ENCODE measurements at regions of chr4 and their contacts with region 1.

Region 1: GRCh38 chr4:164731827-164732474 is 22.0 kb upstream of the SMIM31 start:
- DNase-seq: peak; percentile 71
- H3K4me3 Mint-ChIP-seq: no peak overlapping the region
- H3K27ac Mint-ChIP-seq: no peak overlapping the region
- H3K4me1 Mint-ChIP-seq: no peaks in the 10 kb centered on the region
- H3K27me3 Mint-ChIP-seq: no peaks in the 10 kb centered on the region
- CTCF ChIP-seq: peak; percentile 88

Region 2: DNA sequence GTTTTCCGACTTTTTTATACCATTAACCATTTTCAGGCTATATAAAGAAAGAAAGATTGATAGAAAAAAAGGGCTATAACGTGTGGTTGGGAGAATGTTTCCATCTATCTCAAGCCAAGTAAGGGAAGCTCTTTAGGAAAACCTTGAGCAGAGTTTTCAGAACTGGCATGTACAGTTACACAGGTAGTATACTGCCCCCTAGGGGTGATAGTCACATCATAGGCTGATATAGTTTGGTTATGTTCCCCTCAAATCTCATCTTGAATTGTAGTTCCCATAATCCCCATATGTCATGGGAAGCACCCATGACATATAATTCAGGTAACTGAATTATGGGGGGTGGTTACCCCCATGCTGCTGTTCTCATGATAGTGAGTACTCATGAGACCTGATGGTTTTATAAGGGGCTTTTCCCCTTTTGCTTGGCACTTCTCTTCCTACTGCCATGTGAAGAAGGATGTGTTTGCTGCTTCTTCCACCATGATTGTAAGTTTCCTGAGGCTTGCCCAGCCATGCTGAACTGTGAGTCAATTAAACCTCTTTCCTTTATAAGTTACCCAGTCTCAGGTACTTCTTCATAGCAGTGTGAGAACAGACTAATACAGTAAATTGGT is 1050.6 kb before region 1 on chr4:
- CTCF ChIA-PET with region 1: interaction called, 44 read pairs
- POLR2A ChIA-PET with region 1: no interaction called
- intact Hi-C with region 1: loop called (anchors 1 kb)
- DNase-seq: peak; percentile 55
- H3K4me3 Mint-ChIP-seq: no peak overlapping the region
- H3K27ac Mint-ChIP-seq: no peak overlapping the region
- H3K4me1 Mint-ChIP-seq: no peaks in the 10 kb centered on the region
- H3K27me3 Mint-ChIP-seq: no peaks in the 10 kb centered on the region
- CTCF ChIP-seq: peak; percentile 57

Region 3: DNA sequence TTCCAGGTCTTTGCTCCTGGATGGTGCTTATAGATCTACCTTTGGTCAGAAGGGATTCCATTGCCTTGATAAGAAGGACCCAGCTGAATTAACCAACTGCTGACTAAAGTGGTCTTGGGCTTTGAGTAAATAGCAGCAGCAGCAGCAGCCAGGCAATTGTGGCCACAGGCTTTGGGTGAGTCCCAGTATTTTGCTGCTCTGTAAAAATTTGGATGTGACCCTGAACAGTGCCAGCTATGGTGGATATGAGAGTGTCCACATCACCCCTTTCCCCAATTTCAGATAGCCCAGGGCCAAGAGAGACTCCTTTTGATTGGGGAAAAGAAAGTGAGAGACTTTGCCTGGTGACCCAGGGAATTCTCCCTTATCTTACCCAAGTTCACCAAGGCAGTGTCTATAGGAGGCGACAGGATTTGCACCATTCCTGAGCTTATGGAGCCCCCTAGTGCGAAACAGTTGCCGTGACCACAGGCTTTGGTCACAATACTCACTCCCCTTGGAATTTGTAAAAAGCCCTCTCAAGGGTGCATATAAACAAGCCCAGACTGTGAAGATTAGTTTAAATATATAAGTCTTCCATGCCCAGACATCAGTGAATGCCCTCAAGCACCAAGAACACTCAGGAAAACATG is 719.4 kb before region 1 on chr4:
- CTCF ChIA-PET with region 1: interaction called, 6 read pairs
- POLR2A ChIA-PET with region 1: no interaction called
- intact Hi-C with region 1: loop called (anchors 5 kb)
- DNase-seq: peak; percentile 66
- H3K4me3 Mint-ChIP-seq: no peak overlapping the region
- H3K27ac Mint-ChIP-seq: no peak overlapping the region
- H3K4me1 Mint-ChIP-seq: no peaks in the 10 kb centered on the region
- H3K27me3 Mint-ChIP-seq: no peaks in the 10 kb centered on the region
- CTCF ChIP-seq: peak; percentile 55

Region 4: DNA sequence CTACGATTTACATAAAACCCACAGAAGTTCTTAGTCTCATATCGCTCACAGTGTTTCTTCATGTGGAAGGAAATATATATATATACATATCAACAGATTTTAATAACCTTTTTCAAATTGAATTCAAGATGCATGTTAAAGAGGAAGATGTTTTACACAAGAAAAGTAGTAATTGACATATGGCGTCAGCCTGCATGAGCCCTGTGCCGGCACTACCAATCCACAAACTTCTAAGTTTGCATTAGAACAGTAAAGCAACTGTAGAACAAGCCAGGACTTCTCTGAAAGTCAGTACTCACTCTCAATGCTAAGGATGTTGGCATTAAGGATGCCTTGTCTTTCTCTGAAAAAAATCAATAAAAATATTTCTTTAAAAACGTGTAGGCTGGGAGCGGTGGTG is 419.3 kb before region 1 on chr4:
- CTCF ChIA-PET with region 1: interaction called, 7 read pairs
- POLR2A ChIA-PET with region 1: interaction called, 3 read pairs
- intact Hi-C with region 1: loop called (anchors 1 kb)
- DNase-seq: no peak
- H3K4me3 Mint-ChIP-seq: no peak overlapping the region
- H3K27ac Mint-ChIP-seq: no peak overlapping the region
- H3K4me1 Mint-ChIP-seq: no peaks in the 10 kb centered on the region
- H3K27me3 Mint-ChIP-seq: no peaks in the 10 kb centered on the region
- CTCF ChIP-seq: no peak

Region 5: GRCh38 chr4:164383358-164384220 is 348.4 kb before region 1 on chr4:
- CTCF ChIA-PET with region 1: no interaction called
- POLR2A ChIA-PET with region 1: interaction called, 3 read pairs
- intact Hi-C with region 1: loop called (anchors 2 kb)
- DNase-seq: peak; percentile 40
- H3K4me3 Mint-ChIP-seq: peak overlapping the region; percentile 85
- H3K27ac Mint-ChIP-seq: peak overlapping the region; percentile 39
- H3K4me1 Mint-ChIP-seq: no peaks in the 10 kb centered on the region
- H3K27me3 Mint-ChIP-seq: no peaks in the 10 kb centered on the region
- CTCF ChIP-seq: peak; percentile 15

Region 6: DNA sequence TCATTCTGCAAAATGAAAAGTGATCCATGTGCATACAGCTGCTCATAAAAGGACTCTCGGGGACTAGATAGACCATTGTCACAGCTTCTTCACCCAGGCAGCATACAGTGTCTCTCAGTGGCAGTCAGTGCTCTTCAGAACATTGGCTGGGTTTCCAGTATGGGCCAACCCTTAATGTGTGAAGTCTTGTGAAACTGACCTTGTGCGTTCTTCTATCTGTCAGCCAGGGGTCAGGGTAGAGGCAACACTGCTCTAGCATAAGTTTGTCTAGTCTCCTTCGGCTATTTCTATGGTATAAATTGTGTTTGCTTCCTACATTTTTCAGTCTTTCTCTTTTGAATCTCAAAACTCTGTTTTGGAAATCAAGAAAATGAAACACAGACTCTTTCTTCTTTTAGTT is 15.1 kb before region 1 on chr4:
- CTCF ChIA-PET with region 1: interaction called, 21 read pairs
- POLR2A ChIA-PET with region 1: interaction called, 3 read pairs
- intact Hi-C with region 1: no loop called
- DNase-seq: peak; percentile 26
- H3K4me3 Mint-ChIP-seq: no peak overlapping the region
- H3K27ac Mint-ChIP-seq: no peak overlapping the region
- H3K4me1 Mint-ChIP-seq: no peaks in the 10 kb centered on the region
- H3K27me3 Mint-ChIP-seq: no peaks in the 10 kb centered on the region
- CTCF ChIP-seq: peak; percentile 17

Region 7: DNA sequence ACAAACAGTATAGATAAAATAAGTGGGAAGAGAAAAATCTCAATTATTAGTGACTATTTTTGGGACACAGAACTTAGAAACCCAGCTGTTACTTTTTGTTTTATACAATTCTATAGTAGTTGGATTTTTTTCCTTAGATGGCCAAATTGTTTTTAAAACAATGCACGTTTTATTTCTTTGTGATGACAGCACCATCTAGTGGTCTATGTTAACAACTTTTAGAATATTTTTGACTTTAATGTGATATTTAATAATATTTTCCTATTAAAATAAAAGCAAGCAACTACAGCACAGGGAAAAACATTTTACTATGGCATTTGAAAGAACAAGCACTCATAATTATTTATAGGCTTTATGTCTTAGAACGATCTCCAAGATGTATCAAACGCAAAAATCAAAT is 16.4 kb after region 1 on chr4:
- CTCF ChIA-PET with region 1: interaction called, 26 read pairs
- POLR2A ChIA-PET with region 1: no interaction called
- intact Hi-C with region 1: no loop called
- DNase-seq: peak; percentile 39
- H3K4me3 Mint-ChIP-seq: no peak overlapping the region
- H3K27ac Mint-ChIP-seq: no peak overlapping the region
- H3K4me1 Mint-ChIP-seq: peaks cover 6% of the 10 kb centered on the region
- H3K27me3 Mint-ChIP-seq: no peaks in the 10 kb centered on the region
- CTCF ChIP-seq: peak; percentile 41

Region 8: GRCh38 chr4:164799410-164799809 is 67.5 kb after region 1 on chr4:
- CTCF ChIA-PET with region 1: no interaction called
- POLR2A ChIA-PET with region 1: no interaction called
- intact Hi-C with region 1: no loop called
- DNase-seq: no peak
- H3K4me3 Mint-ChIP-seq: no peak overlapping the region
- H3K27ac Mint-ChIP-seq: no peak overlapping the region
- H3K4me1 Mint-ChIP-seq: peaks cover 6% of the 10 kb centered on the region
- H3K27me3 Mint-ChIP-seq: no peaks in the 10 kb centered on the region
- CTCF ChIP-seq: no peak